WTC11 (cell line): ENCODE measurements at regions of chr3 and their contacts with region 1.

Region 1: GRCh38 chr3:129249276-129250065 is at the start of gene COPG1:
- DNase-seq: peak; percentile 83
- ATAC-seq: peak; percentile 88
- H3K4me3 Mint-ChIP-seq: peak within 1 kb of the TSS; percentile 88
- H3K27ac Mint-ChIP-seq: peak within 1 kb of the TSS; percentile 79
- H3K4me1 Mint-ChIP-seq: peaks cover 15% of the 10 kb centered on the region
- H3K27me3 Mint-ChIP-seq: no peaks in the 10 kb centered on the region
- CTCF ChIP-seq: no peak
- total RNA-seq, gene COPG1: 121 to 132 TPM (median 129 TPM) in 3 replicates

Region 2: GRCh38 chr3:129120254-129121004 is 129.0 kb before region 1 on chr3:
- CTCF ChIA-PET with region 1: interaction called, 35 read pairs
- POLR2A ChIA-PET with region 1: interaction called, 4 read pairs
- DNase-seq: peak; percentile 85
- ATAC-seq: peak; percentile 3
- H3K4me3 Mint-ChIP-seq: peak overlapping the region; percentile 83
- H3K27ac Mint-ChIP-seq: peak overlapping the region; percentile 99
- H3K4me1 Mint-ChIP-seq: peaks cover 56% of the 10 kb centered on the region
- H3K27me3 Mint-ChIP-seq: peaks cover 4% of the 10 kb centered on the region; the same call in 1 of the 2 replicates
- CTCF ChIP-seq: no peak

Region 3: GRCh38 chr3:129183569-129184395 is 65.7 kb before region 1 on chr3 and contains the start of gene CNBP:
- CTCF ChIA-PET with region 1: interaction called, 12 read pairs
- POLR2A ChIA-PET with region 1: interaction called, 4 read pairs
- DNase-seq: peak; percentile 87
- ATAC-seq: peak; percentile 95
- H3K4me3 Mint-ChIP-seq: peak within 1 kb of the TSS; percentile 89
- H3K27ac Mint-ChIP-seq: peak within 1 kb of the TSS; percentile 94
- H3K4me1 Mint-ChIP-seq: peaks cover 28% of the 10 kb centered on the region
- H3K27me3 Mint-ChIP-seq: no peaks in the 10 kb centered on the region
- CTCF ChIP-seq: no peak
- total RNA-seq, gene CNBP: 329 to 390 TPM (median 380 TPM) in 3 replicates

Region 4: DNA sequence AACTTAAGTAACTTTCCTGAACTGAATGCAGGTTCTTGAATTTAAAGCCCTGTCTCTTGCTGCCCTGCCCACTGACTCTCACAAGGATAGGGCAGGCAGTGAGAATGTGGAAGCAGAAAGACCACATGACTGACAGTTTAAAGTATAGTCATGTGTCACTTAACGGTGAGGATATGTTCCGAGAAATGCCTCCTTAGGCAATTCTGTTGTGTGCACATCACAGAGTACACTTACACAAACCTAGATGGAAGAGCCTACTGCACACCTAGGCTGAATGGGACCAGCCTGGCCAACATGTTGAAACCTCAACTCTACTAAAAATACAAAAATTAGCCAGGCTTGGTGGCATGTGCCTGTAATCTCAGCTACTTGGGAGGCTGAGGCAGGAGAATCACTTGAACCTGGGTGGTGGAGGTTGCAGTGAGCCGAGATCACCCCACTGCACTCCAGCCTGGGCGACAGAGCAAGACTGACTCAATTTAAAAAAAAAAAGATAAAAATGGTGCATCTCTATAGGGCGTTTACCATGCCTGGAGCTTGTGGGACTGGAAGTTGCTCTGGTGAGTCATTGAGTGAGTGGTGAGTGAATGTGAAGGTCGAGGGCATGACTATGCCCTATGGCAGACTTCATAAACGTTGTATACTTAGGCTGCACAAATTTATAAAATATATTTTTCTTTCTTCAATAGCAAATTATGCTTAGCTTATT is 19.0 kb before region 1 on chr3:
- CTCF ChIA-PET with region 1: interaction called, 16 read pairs
- POLR2A ChIA-PET with region 1: interaction called, 7 read pairs
- DNase-seq: no peak
- ATAC-seq: no peak
- H3K4me3 Mint-ChIP-seq: no peak overlapping the region
- H3K27ac Mint-ChIP-seq: peak overlapping the region; percentile 72; the same call in 1 of the 2 replicates
- H3K4me1 Mint-ChIP-seq: peaks cover 24% of the 10 kb centered on the region
- H3K27me3 Mint-ChIP-seq: no peaks in the 10 kb centered on the region; the same call in 1 of the 2 replicates
- CTCF ChIP-seq: no peak

Region 5: GRCh38 chr3:129289201-129289921 is 39.9 kb after region 1 on chr3:
- CTCF ChIA-PET with region 1: no interaction called
- POLR2A ChIA-PET with region 1: no interaction called
- DNase-seq: no peak
- ATAC-seq: no peak
- H3K4me3 Mint-ChIP-seq: no peak overlapping the region
- H3K27ac Mint-ChIP-seq: no peak overlapping the region
- H3K4me1 Mint-ChIP-seq: no peaks in the 10 kb centered on the region
- H3K27me3 Mint-ChIP-seq: no peaks in the 10 kb centered on the region
- CTCF ChIP-seq: no peak

Region 6: DNA sequence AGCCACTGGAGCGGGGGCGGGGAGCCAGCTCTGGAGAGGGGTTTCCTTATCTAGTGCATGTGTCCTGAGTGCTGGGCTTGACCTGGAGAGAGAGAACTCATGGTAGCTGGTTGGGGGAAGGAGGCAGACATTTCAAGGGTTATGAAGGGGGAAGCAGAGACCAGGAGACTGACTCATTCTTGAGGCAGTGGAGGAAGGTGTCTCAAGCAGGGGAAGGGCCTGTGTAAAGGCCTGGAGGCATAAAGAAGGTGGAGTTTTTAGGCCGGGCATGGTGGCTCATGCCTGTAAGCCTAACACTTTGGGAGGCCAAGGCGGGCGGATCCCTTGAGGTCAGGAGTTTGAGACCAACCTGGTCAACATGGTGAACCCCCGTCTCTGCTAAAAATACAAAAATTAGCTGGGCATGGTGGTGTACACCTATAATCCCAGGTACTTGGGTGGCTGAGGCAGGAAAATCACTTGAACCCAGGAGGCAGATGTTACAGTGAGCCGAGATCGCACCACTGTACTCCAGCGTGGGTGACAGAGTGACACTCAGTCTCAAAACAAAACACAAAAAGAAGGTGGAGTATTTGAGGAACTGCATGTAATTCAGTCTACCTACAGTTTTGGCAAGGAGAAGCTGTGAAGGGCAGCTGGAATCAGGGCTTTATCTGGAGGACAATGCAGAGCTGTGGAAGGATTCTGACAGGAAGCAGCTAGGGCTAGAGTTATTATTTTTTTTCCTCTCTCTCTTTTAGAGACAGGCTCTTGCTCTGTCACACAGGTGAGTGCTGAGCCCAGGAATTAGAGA is 300.1 kb after region 1 on chr3:
- CTCF ChIA-PET with region 1: no interaction called
- POLR2A ChIA-PET with region 1: no interaction called
- DNase-seq: no peak
- ATAC-seq: no peak
- H3K4me3 Mint-ChIP-seq: no peak overlapping the region
- H3K27ac Mint-ChIP-seq: no peak overlapping the region; the same call in 1 of the 2 replicates
- H3K4me1 Mint-ChIP-seq: peaks cover 14% of the 10 kb centered on the region
- H3K27me3 Mint-ChIP-seq: no peaks in the 10 kb centered on the region
- CTCF ChIP-seq: no peak